ENCODE measurements at regions of chr20 and their contacts with region 1.

Region 1: DNA sequence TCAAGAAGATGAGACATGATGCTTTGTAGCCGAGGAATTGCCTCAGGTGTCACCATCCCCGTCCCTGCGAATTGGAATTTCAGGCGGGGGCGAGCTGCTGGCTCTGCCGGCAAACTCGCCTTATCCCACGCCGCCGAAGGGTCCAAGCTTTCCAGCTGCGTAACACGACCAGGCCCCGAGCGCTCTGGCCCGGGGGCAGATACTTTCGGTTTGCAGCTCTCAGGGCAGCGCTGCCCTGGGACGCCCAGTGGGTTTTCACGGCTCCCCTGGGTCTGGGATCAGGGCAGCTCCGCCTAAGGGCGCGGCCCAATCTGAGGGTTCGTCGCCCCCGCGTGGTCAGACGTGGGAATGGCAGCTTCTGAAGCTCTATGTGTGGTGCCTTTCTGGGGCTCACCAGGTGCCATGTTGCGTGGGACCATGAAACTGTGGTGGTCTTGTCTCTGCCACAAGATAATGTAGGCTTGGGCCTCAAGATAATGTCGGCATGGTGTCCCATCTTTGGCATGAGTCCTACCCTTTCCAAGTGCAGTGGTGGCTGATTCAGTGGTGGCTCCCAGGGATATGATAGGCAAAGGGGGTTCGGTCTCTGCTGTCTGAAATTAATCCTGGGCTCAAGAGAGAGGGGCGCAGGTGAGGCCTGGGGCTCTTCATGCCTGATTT is 20.9 kb downstream of the PIGT start:
- DNase-seq: peak; percentile 95 to 98
- H3K4me3 ChIP-seq: peak overlapping the region; percentile 43
- H3K4me3 Mint-ChIP-seq: peak overlapping the region; percentile 84
- H3K27ac Mint-ChIP-seq: peak overlapping the region; percentile 71
- H3K4me1 ChIP-seq: peaks cover 25% of the 10 kb centered on the region
- H3K4me1 Mint-ChIP-seq: peaks cover 34% of the 10 kb centered on the region
- H3K27me3 ChIP-seq: no peaks in the 10 kb centered on the region
- H3K27me3 Mint-ChIP-seq: no peaks in the 10 kb centered on the region
- CTCF ChIP-seq: peak; percentile 99 to 100

Region 2: DNA sequence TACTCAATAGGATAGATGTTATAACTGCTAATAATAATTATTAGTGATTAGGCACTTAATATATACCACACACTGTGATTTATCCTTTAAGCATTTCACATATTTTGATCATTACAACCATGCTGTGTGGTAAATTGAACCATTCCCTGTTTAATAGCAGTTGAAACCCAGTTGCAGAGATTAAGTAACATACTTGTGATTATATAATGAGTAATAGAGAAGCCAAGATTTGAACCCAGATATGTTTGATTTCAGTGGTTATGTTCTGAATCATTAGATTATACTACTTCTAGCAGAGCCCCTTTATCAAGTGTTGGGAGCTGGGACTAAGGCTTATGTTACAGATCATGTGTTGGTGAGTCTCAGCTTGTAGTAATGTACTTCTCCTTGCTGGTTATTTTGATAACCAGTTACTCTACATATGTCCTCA is 426.4 kb before region 1 on chr20:
- CTCF ChIA-PET with region 1: no interaction called
- POLR2A ChIA-PET with region 1: no interaction called
- intact Hi-C with region 1: no loop called
- DNase-seq: no peak
- H3K4me3 ChIP-seq: no peak overlapping the region
- H3K4me3 Mint-ChIP-seq: no peak overlapping the region
- H3K27ac Mint-ChIP-seq: no peak overlapping the region
- H3K4me1 ChIP-seq: peaks cover 37% of the 10 kb centered on the region
- H3K4me1 Mint-ChIP-seq: peaks cover 33% of the 10 kb centered on the region
- H3K27me3 ChIP-seq: no peaks in the 10 kb centered on the region
- H3K27me3 Mint-ChIP-seq: no peaks in the 10 kb centered on the region
- CTCF ChIP-seq: no peak

Region 3: DNA sequence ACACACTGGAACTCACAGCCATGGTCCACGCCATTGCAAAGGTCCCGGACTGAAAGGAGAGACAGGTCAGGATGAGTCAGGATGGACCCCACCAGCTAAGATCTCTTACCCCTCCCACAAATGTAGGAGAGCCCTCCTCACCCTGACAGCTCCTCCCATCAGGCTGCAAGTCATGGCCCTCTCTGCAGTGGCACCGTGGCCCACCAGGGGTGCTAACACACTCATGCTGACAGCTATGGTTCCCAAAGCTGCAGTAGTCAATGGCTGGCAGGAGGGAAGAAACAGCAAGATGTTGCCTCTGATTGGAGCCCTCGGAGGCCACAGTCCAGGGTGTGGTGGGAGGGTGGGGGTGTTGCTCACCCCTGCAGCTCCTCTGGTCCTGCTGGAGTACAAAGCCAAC is 135.9 kb before region 1 on chr20:
- CTCF ChIA-PET with region 1: interaction called, 11 read pairs
- POLR2A ChIA-PET with region 1: no interaction called
- intact Hi-C with region 1: no loop called
- DNase-seq: peak; percentile 84 to 85
- H3K4me3 ChIP-seq: no peak overlapping the region
- H3K4me3 Mint-ChIP-seq: no peak overlapping the region
- H3K27ac Mint-ChIP-seq: no peak overlapping the region
- H3K4me1 ChIP-seq: 0 out of 2 replicates have a peak, but pooled peaks cover 3% of the 10 kb centered on the region
- H3K4me1 Mint-ChIP-seq: no peaks in the 10 kb centered on the region
- H3K27me3 ChIP-seq: no peaks in the 10 kb centered on the region
- H3K27me3 Mint-ChIP-seq: peaks cover 9% of the 10 kb centered on the region
- CTCF ChIP-seq: peak; percentile 61 to 88

Region 4: DNA sequence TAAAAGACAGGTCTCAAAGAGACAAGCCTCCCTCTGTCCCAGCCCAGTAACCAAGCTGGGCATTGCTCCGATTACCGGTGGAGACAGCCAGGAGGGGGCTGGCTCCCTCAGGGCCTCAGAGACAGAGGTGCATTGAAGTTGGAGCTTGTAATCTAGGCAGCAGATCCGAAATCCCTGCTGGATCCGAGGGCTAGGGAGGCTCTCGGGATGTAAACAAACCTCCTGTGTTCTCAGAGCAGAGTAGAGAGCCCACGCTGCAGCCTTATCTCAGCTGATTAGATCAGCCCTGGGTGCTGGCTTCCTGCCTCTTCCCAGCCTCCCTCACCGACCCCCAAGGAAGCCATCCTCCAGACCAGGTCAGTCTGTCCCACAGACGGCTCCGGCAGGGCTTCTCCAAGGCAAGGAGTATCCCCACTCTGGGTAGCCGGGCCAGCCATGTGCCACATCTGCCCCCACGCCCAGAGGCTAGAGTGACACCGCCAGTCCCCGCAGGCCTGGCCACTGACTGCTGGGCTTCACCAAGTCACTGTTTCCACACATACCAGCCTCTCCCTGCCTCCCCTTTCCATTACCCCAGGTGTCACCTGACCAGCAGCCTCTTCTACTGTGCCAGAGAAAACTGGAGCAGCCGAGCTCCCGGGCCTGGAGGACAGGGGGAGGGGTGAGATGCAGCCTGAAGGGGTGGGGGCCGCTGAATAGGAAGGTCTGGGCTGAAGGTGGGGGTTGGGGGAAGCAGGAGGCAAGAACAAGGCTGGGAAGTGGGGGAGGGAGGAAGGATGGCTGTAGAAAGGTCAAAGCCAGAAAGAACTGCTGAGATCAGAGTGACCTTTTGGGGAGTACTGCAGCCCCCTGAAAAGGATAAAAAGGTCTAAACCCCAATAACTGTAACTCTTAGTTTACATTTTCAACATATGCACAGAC is 94.7 kb before region 1 on chr20:
- CTCF ChIA-PET with region 1: interaction called, 26 read pairs
- POLR2A ChIA-PET with region 1: interaction called, 7 read pairs
- intact Hi-C with region 1: no loop called
- DNase-seq: peak; percentile 90 to 93
- H3K4me3 ChIP-seq: peak overlapping the region; percentile 24
- H3K4me3 Mint-ChIP-seq: peak overlapping the region; percentile 97
- H3K27ac Mint-ChIP-seq: peak overlapping the region; percentile 77
- H3K4me1 ChIP-seq: peaks cover 99% of the 10 kb centered on the region
- H3K4me1 Mint-ChIP-seq: peaks cover 95% of the 10 kb centered on the region
- H3K27me3 ChIP-seq: no peaks in the 10 kb centered on the region
- H3K27me3 Mint-ChIP-seq: no peaks in the 10 kb centered on the region
- CTCF ChIP-seq: no peak

Region 5: DNA sequence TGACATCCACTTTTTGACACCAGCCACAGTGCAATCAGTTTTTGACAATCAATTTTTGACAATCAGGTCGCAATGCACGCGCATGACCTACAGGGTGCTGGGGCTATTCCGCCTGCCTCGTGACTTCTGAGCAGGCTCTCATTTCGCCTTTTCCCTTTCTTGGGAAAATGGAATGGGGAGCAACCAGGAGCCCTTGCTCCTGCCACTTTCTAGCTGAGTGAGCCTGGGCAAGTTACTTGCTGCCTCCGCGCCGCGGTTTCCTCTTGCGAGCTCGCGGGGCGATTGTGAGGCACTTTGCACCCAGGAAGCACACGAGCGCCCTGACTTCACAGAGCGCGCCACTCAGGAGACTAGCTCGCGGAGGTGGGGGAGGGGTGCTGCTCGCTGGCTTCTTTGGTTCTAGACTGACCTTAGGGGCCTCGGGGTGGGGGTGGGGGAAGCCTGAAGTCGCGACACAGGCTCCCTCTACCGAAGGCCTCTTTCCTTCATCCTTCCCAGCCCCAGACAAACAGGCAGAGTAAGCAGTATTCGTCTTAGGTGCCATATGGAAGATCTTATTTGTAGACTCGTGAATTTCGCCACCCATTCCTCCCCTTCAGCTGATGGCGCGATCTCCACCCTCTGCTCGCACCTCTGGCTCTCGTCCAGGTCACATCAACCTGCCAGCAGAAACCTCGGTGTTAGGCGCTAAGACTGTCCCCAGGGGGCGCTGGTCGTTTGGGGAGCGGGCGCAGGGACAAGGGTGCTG is 63.3 kb before region 1 on chr20:
- CTCF ChIA-PET with region 1: interaction called, 95 read pairs
- POLR2A ChIA-PET with region 1: interaction called, 5 read pairs
- intact Hi-C with region 1: loop called (anchors 1 kb)
- DNase-seq: peak; percentile 85 to 90
- H3K4me3 ChIP-seq: no peak overlapping the region
- H3K4me3 Mint-ChIP-seq: peak overlapping the region; percentile 64
- H3K27ac Mint-ChIP-seq: no peak overlapping the region
- H3K4me1 ChIP-seq: no peaks in the 10 kb centered on the region
- H3K4me1 Mint-ChIP-seq: no peaks in the 10 kb centered on the region
- H3K27me3 ChIP-seq: no peaks in the 10 kb centered on the region
- H3K27me3 Mint-ChIP-seq: no peaks in the 10 kb centered on the region
- CTCF ChIP-seq: peak; percentile 90 to 93

Region 6: DNA sequence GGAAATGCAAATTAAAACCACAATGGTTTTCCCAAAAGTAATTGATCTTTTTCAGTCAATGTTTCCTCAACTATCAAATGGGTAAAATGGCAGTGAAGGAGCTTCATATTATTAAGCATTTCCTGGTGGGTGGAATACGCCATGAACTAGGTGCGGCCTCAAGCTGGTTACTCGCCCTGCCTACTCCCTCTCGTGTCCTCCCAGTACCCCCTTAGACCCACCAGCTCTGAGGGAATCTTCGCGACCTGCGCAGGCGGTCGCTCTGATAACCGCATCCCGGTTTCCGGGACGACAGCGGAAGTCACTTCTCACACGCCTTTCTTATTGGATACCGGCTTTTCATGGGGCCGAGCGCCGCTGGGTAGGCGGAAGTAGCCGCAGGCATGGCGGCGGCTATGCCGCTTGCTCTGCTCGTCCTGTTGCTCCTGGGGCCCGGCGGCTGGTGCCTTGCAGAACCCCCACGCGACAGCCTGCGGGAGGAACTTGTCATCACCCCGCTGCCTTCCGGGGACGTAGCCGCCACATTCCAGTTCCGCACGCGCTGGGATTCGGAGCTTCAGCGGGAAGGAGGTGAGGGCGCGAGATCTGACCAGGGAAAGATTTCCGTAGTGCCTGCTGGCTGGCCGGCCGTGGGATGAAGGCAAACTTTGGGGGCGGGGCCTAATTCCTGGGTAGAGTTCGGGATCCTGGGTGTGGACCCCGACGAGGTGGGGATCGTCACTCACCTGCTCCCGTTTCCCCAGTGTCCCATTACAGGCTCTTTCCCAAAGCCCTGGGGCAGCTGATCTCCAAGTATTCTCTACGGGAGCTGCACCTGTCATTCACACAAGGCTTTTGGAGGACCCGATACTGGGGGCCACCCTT is 20.9 kb before region 1 on chr20 and contains the start of gene PIGT:
- CTCF ChIA-PET with region 1: interaction called, 13 read pairs
- POLR2A ChIA-PET with region 1: interaction called, 15 read pairs
- intact Hi-C with region 1: loop called (anchors 2 kb)
- DNase-seq: peak; percentile 95
- H3K4me3 ChIP-seq: peak within 1 kb of the TSS; percentile 89
- H3K4me3 Mint-ChIP-seq: peak within 1 kb of the TSS; percentile 87
- H3K27ac Mint-ChIP-seq: peak within 1 kb of the TSS; percentile 92
- H3K4me1 ChIP-seq: peaks cover 13% of the 10 kb centered on the region; the same call in 1 of the 2 replicates
- H3K4me1 Mint-ChIP-seq: peaks cover 6% of the 10 kb centered on the region
- H3K27me3 ChIP-seq: no peaks in the 10 kb centered on the region
- H3K27me3 Mint-ChIP-seq: no peaks in the 10 kb centered on the region
- CTCF ChIP-seq: peak in 1 of 2 experiments; percentile 30
- total RNA-seq, gene PIGT: 239 and 259 TPM in 2 replicates

Region 7: DNA sequence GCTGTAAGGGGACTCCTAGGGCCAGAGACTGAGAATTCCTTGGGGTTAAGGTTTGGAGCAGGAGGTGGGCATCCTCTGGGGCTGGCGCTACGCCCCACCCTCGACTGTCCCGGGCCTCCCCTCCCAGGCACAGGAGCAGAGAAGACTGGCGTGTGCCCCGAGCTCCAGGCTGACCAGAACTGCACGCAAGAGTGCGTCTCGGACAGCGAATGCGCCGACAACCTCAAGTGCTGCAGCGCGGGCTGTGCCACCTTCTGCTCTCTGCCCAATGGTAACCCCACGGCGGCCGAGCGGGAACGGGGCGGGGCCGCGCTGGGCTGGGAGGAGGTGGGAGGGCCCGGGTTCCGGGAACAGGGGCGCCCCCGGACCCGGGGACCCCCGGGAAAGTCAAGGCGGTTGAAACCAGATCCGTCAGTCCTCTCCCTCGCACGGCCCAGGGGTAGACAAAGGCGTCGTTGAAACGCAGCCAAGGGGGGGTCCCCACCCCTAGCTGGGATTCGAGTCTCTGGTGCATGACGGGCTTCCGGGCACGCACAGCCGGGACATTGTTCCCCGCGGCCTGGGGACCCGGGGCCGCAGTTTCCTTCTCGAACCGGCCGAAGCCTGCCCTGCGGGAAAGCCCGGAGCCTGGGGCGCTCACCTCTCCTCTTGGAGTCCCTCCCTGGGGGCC is 33.5 kb after region 1 on chr20:
- CTCF ChIA-PET with region 1: interaction called, 14 read pairs
- POLR2A ChIA-PET with region 1: no interaction called
- intact Hi-C with region 1: loop called (anchors 2 kb)
- DNase-seq: peak; percentile 61 to 65
- H3K4me3 ChIP-seq: peak overlapping the region; percentile 44
- H3K4me3 Mint-ChIP-seq: peak overlapping the region; percentile 77
- H3K27ac Mint-ChIP-seq: no peak overlapping the region
- H3K4me1 ChIP-seq: peaks cover 18% of the 10 kb centered on the region; the same call in 1 of the 2 replicates
- H3K4me1 Mint-ChIP-seq: peaks cover 8% of the 10 kb centered on the region
- H3K27me3 ChIP-seq: peaks cover 9% of the 10 kb centered on the region
- H3K27me3 Mint-ChIP-seq: peaks cover 15% of the 10 kb centered on the region
- CTCF ChIP-seq: no peak